GM10248 (cell line): ENCODE measurements at regions of chr6 and their contacts with region 1.

Region 1: GRCh38 chr6:121055572-121056163 is 278.6 kb downstream of the TBC1D32 start:
- DNase-seq: peak; percentile 15
- CTCF ChIP-seq: peak; percentile 55

Region 2: DNA sequence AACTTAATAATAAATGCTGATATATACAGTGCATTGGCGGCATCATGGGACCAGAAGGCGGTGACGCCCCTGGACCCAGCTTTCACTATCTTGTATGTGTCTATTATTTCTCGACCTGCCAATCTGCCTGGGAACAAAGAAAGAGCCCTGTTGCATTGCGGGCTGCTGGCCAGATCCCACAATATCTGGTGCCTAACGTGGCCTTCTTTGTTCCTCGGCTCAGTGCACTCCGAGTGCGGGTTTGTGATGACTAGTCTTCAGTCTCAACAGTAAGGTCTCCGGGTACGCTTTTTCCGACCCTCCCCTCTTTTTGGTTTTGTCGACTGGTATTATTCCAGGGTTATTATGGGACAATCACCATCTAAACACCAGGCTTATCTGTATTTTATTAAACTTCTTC is 12.9 kb before region 1 on chr6:
- CTCF ChIA-PET with region 1: interaction called, 14 read pairs
- POLR2A ChIA-PET with region 1: no interaction called
- DNase-seq: no peak
- CTCF ChIP-seq: no peak

Region 3: GRCh38 chr6:121086876-121087275 is 31.2 kb after region 1 on chr6:
- CTCF ChIA-PET with region 1: no interaction called
- POLR2A ChIA-PET with region 1: no interaction called
- DNase-seq: no peak
- CTCF ChIP-seq: no peak

Region 4: DNA sequence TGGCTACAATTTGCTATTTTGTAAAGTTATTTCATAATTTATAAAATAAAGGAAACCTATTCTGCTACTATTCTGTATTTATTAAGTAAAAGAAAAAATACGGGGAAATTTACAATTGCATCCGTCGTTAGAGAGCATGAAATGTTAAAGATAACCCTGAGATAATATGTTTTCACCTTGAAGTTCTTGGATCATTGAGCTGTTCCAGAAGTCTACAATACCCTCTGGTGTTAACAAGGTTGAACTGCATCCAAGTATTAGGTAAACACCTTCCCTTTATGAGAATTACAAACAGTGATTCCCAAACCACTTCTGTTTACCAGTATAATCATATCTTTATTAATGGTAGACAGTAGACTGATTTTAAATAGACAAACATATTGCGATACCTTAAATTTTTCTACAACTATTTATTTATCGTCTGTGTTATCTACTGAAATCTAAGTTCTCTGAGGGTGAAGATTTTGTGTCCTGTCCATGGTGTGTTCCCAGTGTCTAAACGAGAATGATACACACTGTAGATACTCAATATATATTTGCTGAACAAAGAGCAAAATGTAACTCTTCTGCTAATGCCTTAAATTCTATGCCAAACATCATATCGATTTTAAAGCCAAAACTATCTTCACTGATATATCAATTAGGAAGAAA is 250.4 kb after region 1 on chr6:
- CTCF ChIA-PET with region 1: interaction called, 55 read pairs
- POLR2A ChIA-PET with region 1: no interaction called
- DNase-seq: peak; percentile 28
- CTCF ChIP-seq: peak; percentile 69